Sciatic nerve (tissue), 2 donors: ENCODE measurements at regions of chr17 and their contacts with region 1.

Region 1: GRCh38 chr17:42212382-42212781 is 18.1 kb upstream of the GHDC start:
- DNase-seq: no peak
- ATAC-seq: peak; percentile 74

Region 2: GRCh38 chr17:42163113-42163512 is 49.3 kb before region 1 on chr17:
- intact Hi-C with region 1: no loop called
- DNase-seq: no peak
- ATAC-seq: no peak

Region 3: GRCh38 chr17:42294469-42295398 is 82.4 kb after region 1 on chr17:
- intact Hi-C with region 1: no loop called
- DNase-seq: no peak
- ATAC-seq: no peak

Region 4: DNA sequence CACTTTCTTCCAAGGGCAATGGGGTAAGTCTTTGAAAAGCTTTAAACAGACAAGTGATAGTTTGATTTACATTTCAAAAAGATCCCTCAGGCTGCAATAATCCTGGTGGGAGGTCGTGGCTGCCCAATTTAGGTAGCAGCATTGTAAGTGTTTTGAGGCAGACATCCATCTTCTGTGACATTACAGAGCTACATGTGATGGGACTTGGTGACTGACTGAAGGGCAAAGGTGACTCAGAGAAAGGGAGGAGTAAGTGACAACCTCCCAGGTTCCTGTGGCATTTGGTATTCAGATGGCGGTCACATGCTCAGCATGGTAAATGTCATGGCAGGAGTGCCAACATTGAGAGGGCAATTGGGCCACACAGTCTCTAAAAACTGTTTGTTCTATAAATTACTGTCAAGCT is 149.4 kb after region 1 on chr17:
- intact Hi-C with region 1: no loop called
- DNase-seq: no peak
- ATAC-seq: no peak

Region 5: GRCh38 chr17:42798383-42799380 is 586.3 kb after region 1 on chr17 and contains the starts of genes CNTD1 and COA3:
- intact Hi-C with region 1: loop called (anchors 10 kb)
- DNase-seq: peak; percentile 90
- ATAC-seq: peak; percentile 97
- total RNA-seq, gene CNTD1: 1.1 TPM
- total RNA-seq, gene COA3: 36.1 TPM